PC-3 (cell line): ENCODE measurements at regions of chr5 and their contacts with region 1.

Region 1: GRCh38 chr5:83076742-83077661 is at the starts of genes TMEM167A and XRCC4:
- DNase-seq: peak; percentile 98
- ATAC-seq: peak; percentile 100
- H3K4me3 ChIP-seq: peak within 1 kb of the TSS; percentile 94
- H3K27ac ChIP-seq: peak within 1 kb of the TSS; percentile 53
- H3K4me1 ChIP-seq: peaks cover 19% of the 10 kb centered on the region
- H3K27me3 ChIP-seq: no peaks in the 10 kb centered on the region
- CTCF ChIP-seq: no peak
- total RNA-seq, gene TMEM167A: 25.1 and 35.7 TPM in 2 replicates
- total RNA-seq, gene XRCC4: 11.5 and 13.8 TPM in 2 replicates

Region 2: DNA sequence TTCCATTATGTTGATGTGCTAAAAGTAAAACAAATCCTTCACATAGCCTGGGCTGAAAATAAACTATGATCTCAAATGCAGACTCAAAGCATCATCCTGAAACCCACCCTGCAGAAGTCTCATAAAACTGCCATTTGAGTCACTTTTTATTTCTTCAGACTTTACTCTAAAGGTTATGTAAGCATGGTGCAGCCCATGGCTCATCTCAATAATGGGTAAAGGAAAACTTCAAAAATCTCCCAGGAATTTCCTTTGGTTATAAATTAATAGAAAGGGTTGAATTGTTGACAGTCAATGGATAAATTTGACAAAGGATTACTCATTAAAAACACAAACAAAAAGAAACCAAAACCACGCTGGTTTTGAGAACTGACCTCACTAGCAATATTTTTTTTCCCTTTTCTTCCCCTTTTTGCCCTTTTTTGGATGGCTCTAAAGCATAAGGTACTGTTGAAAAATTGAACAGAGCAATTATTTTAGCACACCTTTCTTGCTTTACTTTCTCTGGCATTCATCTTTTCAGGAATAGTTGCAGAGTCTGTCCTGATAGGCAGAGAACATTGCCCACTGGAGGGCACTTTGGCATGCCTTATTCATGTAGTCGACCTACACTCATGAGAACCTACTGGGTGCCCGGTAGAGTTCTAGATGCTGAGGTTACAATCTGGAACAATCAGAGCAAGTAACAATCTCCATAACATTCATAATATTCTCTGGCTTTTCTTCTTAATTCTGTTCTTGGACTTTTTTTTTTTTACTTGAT is 191.2 kb before region 1 on chr5:
- CTCF ChIA-PET with region 1: no interaction called
- POLR2A ChIA-PET with region 1: no interaction called
- intact Hi-C with region 1: loop called (anchors 5 kb)
- DNase-seq: peak; percentile 88
- ATAC-seq: peak; percentile 91
- H3K4me3 ChIP-seq: no peak overlapping the region
- H3K27ac ChIP-seq: peak overlapping the region; percentile 72
- H3K4me1 ChIP-seq: peaks cover 30% of the 10 kb centered on the region
- H3K27me3 ChIP-seq: no peaks in the 10 kb centered on the region
- CTCF ChIP-seq: peak; percentile 57